ENCODE measurements at regions of chr3 and their contacts with region 1.

Region 1: GRCh38 chr3:46463120-46463867 is 1.4 kb downstream of the LTF start:
- DNase-seq: no peak
- H3K4me3 ChIP-seq: no peak overlapping the region
- H3K27ac ChIP-seq: no peak overlapping the region
- H3K4me1 ChIP-seq: no peaks in the 10 kb centered on the region
- H3K27me3 ChIP-seq: no peaks in the 10 kb centered on the region
- CTCF ChIP-seq: no peak

Region 2: GRCh38 chr3:46797458-46797857 is 334.2 kb after region 1 on chr3:
- CTCF ChIA-PET with region 1: no interaction called
- POLR2A ChIA-PET with region 1: interaction called, 10 read pairs
- intact Hi-C with region 1: no loop called
- DNase-seq: peak in 1 of 2 experiments; percentile 48
- H3K4me3 ChIP-seq: no peak overlapping the region
- H3K27ac ChIP-seq: no peak overlapping the region
- H3K4me1 ChIP-seq: no peaks in the 10 kb centered on the region
- H3K27me3 ChIP-seq: peaks cover 4% of the 10 kb centered on the region; the same call in 1 of the 2 replicates
- CTCF ChIP-seq: no peak